Testis (tissue), 5 donors: ENCODE measurements at regions of chr11 and their contacts with region 1.

Region 1: GRCh38 chr11:83071567-83072349 is at the start of gene RAB30:
- DNase-seq: peak; percentile 99
- H3K4me3 ChIP-seq: peak within 1 kb of the TSS; percentile 71 to 79
- H3K27ac ChIP-seq: peak within 1 kb of the TSS; percentile 89 to 93
- H3K4me1 ChIP-seq: peaks cover 12% of the 10 kb centered on the region
- H3K27me3 ChIP-seq: no peaks in the 10 kb centered on the region
- CTCF ChIP-seq: peak in 1 of 3 experiments; percentile 1
- POLR2A ChIP-seq: peak; percentile 73
- total RNA-seq, gene RAB30: 12.3 to 13.1 TPM

Region 2: GRCh38 chr11:83156150-83156995 is 84.6 kb after region 1 on chr11:
- intact Hi-C with region 1: loop called (anchors 5 kb)
- DNase-seq: peak; percentile 100
- H3K4me3 ChIP-seq: peak overlapping the region; percentile 100
- H3K27ac ChIP-seq: peak overlapping the region; percentile 96 to 100
- H3K4me1 ChIP-seq: peaks cover 8% of the 10 kb centered on the region
- H3K27me3 ChIP-seq: no peaks in the 10 kb centered on the region
- CTCF ChIP-seq: no peak
- POLR2A ChIP-seq: peak; percentile 97

Region 3: DNA sequence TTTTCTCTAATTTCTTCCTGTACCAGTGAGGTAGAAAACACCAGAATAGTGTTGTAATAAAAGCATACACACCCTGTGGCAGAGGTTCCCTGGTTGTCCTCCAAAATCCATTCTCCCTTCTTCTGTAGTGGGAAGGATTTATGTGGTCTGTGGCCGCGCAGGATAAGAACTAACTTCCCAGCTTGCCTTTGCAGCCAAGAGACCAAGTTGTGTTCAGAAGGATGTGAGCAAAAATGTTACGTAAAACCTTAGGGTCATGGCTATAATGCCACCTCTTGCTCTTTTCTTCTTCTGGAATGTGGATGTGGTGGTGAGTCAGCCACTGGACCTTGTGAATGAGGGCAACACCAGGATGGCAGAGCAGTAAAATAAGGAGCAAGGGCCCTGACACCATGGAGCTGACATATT is 186.0 kb after region 1 on chr11:
- intact Hi-C with region 1: no loop called
- DNase-seq: no peak
- H3K4me3 ChIP-seq: no peak overlapping the region
- H3K27ac ChIP-seq: peak overlapping the region in 1 of 2 donors; percentile 8
- H3K4me1 ChIP-seq: no peaks in the 10 kb centered on the region
- H3K27me3 ChIP-seq: no peaks in the 10 kb centered on the region
- CTCF ChIP-seq: no peak
- POLR2A ChIP-seq: no peak

Region 4: GRCh38 chr11:83272627-83273026 is 200.9 kb after region 1 on chr11:
- intact Hi-C with region 1: no loop called
- DNase-seq: no peak
- H3K4me3 ChIP-seq: no peak overlapping the region
- H3K27ac ChIP-seq: no peak overlapping the region
- H3K4me1 ChIP-seq: no peaks in the 10 kb centered on the region
- H3K27me3 ChIP-seq: no peaks in the 10 kb centered on the region
- CTCF ChIP-seq: no peak
- POLR2A ChIP-seq: no peak

Region 5: GRCh38 chr11:83438438-83438837 is 366.7 kb after region 1 on chr11:
- intact Hi-C with region 1: no loop called
- DNase-seq: no peak
- H3K4me3 ChIP-seq: no peak overlapping the region
- H3K27ac ChIP-seq: no peak overlapping the region
- H3K4me1 ChIP-seq: no peaks in the 10 kb centered on the region
- H3K27me3 ChIP-seq: no peaks in the 10 kb centered on the region
- CTCF ChIP-seq: no peak
- POLR2A ChIP-seq: no peak